MCF 10A (cell line): ENCODE measurements at regions of chr5 and their contacts with region 1.

Region 1: DNA sequence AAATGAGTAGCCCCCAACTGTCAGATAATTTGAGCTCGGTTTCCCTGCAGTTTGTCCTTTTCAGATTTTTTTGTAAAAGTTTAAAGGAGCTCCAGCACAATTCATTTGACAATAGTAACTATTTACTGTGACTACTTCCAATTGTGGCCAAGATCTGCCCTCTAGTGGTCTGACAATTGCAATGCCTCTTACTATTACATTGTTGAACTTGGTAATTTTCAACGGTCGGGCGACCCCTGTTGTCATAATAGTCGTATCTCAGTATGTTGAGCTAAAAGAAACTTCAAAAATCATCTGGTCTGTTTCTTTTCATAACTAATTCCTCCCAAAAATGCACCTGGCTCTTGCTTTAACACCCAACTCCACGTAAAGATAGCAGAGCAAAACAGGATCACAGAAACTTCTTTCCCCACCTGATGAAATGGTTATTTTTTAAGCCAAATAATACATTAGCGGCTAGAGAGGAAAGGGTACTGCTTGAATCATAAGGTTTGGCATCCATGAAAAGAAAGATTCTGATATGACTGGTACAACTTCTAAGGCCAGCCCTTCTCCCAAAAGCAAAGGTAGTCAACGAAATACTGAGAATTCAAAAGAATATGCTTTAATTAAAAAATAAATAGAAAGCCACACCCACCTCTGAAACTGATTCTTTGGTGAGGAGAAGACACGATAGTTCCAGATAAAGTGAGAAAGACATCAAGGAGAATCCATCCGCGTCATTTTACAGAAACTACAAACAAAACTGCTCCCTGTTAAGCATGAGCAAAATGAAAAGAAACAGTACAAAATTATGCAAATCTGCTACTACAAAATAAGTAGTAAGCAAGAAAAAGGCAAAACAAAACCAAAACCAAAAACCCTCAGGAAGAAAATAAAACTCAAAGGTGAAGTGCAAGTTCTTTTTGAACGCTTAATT is 76.9 kb upstream of the HTR4 start:
- DNase-seq: peak; percentile 95
- H3K4me3 Mint-ChIP-seq: no peak overlapping the region
- H3K27ac Mint-ChIP-seq: peak overlapping the region; percentile 62
- H3K4me1 Mint-ChIP-seq: peaks cover 52% of the 10 kb centered on the region
- H3K27me3 Mint-ChIP-seq: no peaks in the 10 kb centered on the region
- CTCF ChIP-seq: peak; percentile 99

Region 2: GRCh38 chr5:147887024-147887627 is 844.1 kb before region 1 on chr5:
- CTCF ChIA-PET with region 1: no interaction called
- POLR2A ChIA-PET with region 1: no interaction called
- intact Hi-C with region 1: loop called (anchors 5 kb)
- DNase-seq: peak; percentile 75
- H3K4me3 Mint-ChIP-seq: no peak overlapping the region
- H3K27ac Mint-ChIP-seq: no peak overlapping the region
- H3K4me1 Mint-ChIP-seq: peaks cover 16% of the 10 kb centered on the region
- H3K27me3 Mint-ChIP-seq: no peaks in the 10 kb centered on the region
- CTCF ChIP-seq: peak; percentile 76

Region 3: GRCh38 chr5:148383564-148384379 is 347.4 kb before region 1 on chr5 and contains the start of gene FBXO38:
- CTCF ChIA-PET with region 1: interaction called, 7 read pairs
- POLR2A ChIA-PET with region 1: interaction called, 3 read pairs
- intact Hi-C with region 1: loop called (anchors 1 kb)
- DNase-seq: peak; percentile 99
- H3K4me3 Mint-ChIP-seq: peak within 1 kb of the TSS; percentile 85
- H3K27ac Mint-ChIP-seq: peak within 1 kb of the TSS; percentile 98
- H3K4me1 Mint-ChIP-seq: peaks cover 44% of the 10 kb centered on the region
- H3K27me3 Mint-ChIP-seq: no peaks in the 10 kb centered on the region
- CTCF ChIP-seq: no peak
- total RNA-seq, gene FBXO38: 54.4 and 76.1 TPM in 2 replicates

Region 4: DNA sequence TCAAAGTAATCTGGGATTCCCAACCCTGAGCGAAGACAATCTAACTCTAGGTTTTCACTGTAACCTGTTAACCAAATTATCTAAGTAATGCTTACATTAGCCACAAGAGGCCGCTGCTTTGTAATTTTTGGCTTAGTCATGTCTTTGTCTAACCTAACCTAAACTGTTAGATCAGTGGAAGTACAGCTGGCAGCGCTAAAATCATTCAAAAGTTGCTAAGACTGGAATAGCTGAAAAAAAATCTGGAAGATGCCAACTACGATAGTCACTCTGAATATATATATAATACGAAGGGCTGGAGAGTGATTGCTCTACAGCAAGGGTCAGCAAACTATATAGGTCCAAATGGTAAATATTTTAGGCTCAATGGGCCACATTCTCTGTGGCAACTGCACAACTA is 287.2 kb before region 1 on chr5:
- CTCF ChIA-PET with region 1: interaction called, 924 read pairs
- POLR2A ChIA-PET with region 1: interaction called, 80 read pairs
- intact Hi-C with region 1: loop called (anchors 1 kb)
- DNase-seq: peak; percentile 87
- H3K4me3 Mint-ChIP-seq: no peak overlapping the region
- H3K27ac Mint-ChIP-seq: no peak overlapping the region
- H3K4me1 Mint-ChIP-seq: no peaks in the 10 kb centered on the region
- H3K27me3 Mint-ChIP-seq: no peaks in the 10 kb centered on the region
- CTCF ChIP-seq: peak; percentile 74

Region 5: DNA sequence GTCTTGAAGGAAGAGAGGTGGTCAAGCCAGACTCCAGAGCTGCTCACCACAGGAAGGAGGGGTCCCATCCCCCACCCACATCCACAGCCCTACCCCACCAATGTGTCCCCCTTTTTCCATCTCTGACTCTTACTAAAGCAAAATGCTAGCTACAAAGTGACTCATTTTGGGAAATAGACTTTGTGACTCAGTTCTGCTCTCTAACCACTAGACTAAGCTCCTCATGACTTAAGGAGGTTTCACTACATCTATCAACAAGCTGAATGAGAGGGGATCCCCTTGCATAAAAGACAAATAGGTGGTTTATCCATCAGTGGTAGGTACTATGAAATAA is 60.1 kb after region 1 on chr5:
- CTCF ChIA-PET with region 1: interaction called, 14 read pairs
- POLR2A ChIA-PET with region 1: interaction called, 3 read pairs
- intact Hi-C with region 1: no loop called
- DNase-seq: peak; percentile 66
- H3K4me3 Mint-ChIP-seq: no peak overlapping the region
- H3K27ac Mint-ChIP-seq: peak overlapping the region; percentile 88
- H3K4me1 Mint-ChIP-seq: peaks cover 60% of the 10 kb centered on the region
- H3K27me3 Mint-ChIP-seq: no peaks in the 10 kb centered on the region
- CTCF ChIP-seq: no peak

Region 6: DNA sequence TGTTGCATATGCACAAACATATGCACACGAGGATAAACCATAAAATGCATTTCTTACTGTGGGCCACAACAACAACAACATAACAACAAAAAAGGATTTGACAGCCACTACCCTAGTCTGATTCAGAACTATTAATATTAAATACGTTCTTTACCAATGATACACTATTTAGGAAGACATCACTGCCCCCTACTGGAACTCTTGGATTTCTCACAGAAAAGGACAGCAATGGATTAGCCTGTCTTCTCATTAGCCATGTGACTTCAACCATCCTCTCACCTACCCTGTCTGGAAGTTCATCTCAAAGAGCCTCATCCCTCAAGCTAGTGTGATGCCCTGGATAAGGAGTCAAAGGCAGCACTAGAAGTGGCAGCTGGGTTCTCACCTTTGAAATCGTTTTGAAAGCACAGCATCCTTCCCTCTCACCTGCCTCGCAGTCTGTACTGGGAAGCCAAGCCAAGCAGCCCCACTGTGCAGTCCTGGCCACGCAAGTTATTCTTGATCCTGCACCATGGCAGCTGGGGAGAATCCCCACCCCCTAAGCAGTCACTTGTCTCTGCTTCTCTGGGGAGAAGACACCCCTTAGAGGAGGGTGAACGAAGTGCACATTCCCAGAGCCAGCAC is 267.1 kb after region 1 on chr5:
- CTCF ChIA-PET with region 1: interaction called, 903 read pairs
- POLR2A ChIA-PET with region 1: interaction called, 7 read pairs
- intact Hi-C with region 1: loop called (anchors 1 kb)
- DNase-seq: peak; percentile 93
- H3K4me3 Mint-ChIP-seq: no peak overlapping the region
- H3K27ac Mint-ChIP-seq: peak overlapping the region; percentile 73
- H3K4me1 Mint-ChIP-seq: peaks cover 60% of the 10 kb centered on the region
- H3K27me3 Mint-ChIP-seq: no peaks in the 10 kb centered on the region
- CTCF ChIP-seq: peak; percentile 79

Region 7: GRCh38 chr5:149114403-149115312 is 383.5 kb after region 1 on chr5:
- CTCF ChIA-PET with region 1: interaction called, 732 read pairs
- POLR2A ChIA-PET with region 1: interaction called, 30 read pairs
- intact Hi-C with region 1: loop called (anchors 1 kb)
- DNase-seq: peak; percentile 93
- H3K4me3 Mint-ChIP-seq: no peak overlapping the region
- H3K27ac Mint-ChIP-seq: peak overlapping the region; percentile 65
- H3K4me1 Mint-ChIP-seq: peaks cover 45% of the 10 kb centered on the region
- H3K27me3 Mint-ChIP-seq: no peaks in the 10 kb centered on the region
- CTCF ChIP-seq: peak; percentile 97